ENCODE measurements at regions of chr15 and their contacts with region 1.

Region 1: DNA sequence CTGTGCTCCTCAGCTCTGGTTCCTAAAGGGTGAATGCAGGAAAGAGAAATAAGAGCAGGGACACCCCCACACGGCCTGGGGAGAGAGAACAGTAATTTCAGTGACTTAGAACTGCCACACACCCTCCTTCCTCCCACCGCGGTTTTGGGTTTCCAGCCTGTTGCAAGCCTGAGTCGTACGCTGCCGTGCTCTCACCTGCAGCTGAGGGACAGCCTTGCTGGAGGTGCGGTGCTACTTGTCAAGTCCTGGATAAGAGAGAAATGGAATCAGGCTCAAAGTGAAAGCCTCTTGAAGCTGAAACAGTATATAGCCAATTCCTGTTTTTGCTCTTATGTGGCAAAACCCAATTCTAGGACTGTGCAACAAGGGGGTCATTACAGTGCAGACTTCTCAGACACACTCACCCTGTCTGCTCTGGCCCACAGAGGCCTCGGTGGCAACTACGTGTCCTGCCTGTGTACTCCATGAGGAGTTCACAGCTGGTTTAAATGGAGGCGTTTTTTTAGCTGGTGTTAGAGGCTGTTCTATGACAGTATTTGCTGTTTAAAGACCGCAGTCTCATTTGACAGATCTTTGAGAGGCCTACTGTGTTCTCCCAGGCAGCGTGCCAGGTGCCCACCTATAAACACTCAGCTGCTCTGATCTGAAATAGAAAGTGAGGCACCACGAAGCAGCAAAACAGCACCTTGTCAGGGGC is 42.9 kb downstream of the TBC1D2B start:
- DNase-seq: peak; percentile 60 to 89 (median 76)
- ATAC-seq: peak; percentile 89
- H3K4me3 ChIP-seq: peak overlapping the region; percentile 9
- H3K4me3 Mint-ChIP-seq: peak overlapping the region; percentile 67
- H3K27ac ChIP-seq: peak overlapping the region; percentile 56 to 72
- H3K27ac Mint-ChIP-seq: peak overlapping the region; percentile 95
- H3K4me1 ChIP-seq: peaks cover 68% of the 10 kb centered on the region
- H3K4me1 Mint-ChIP-seq: peaks cover 90% of the 10 kb centered on the region
- H3K27me3 ChIP-seq: no peaks in the 10 kb centered on the region
- H3K27me3 Mint-ChIP-seq: no peaks in the 10 kb centered on the region
- CTCF ChIP-seq: no peak

Region 2: GRCh38 chr15:77921664-77922063 is 113.0 kb before region 1 on chr15:
- CTCF ChIA-PET with region 1: no interaction called
- POLR2A ChIA-PET with region 1: no interaction called
- intact Hi-C with region 1: no loop called
- DNase-seq: no peak
- ATAC-seq: no peak
- H3K4me3 ChIP-seq: no peak overlapping the region
- H3K4me3 Mint-ChIP-seq: no peak overlapping the region
- H3K27ac ChIP-seq: no peak overlapping the region
- H3K27ac Mint-ChIP-seq: no peak overlapping the region
- H3K4me1 ChIP-seq: no peaks in the 10 kb centered on the region
- H3K4me1 Mint-ChIP-seq: no peaks in the 10 kb centered on the region
- H3K27me3 ChIP-seq: no peaks in the 10 kb centered on the region
- H3K27me3 Mint-ChIP-seq: peaks cover 9% of the 10 kb centered on the region
- CTCF ChIP-seq: no peak

Region 3: GRCh38 chr15:78018946-78019644 is 15.5 kb before region 1 on chr15:
- CTCF ChIA-PET with region 1: interaction called, 3 read pairs
- POLR2A ChIA-PET with region 1: interaction called, 11 read pairs
- intact Hi-C with region 1: no loop called
- DNase-seq: peak in 3 of 14 experiments; percentile 36 to 62 (median 57)
- ATAC-seq: peak; percentile 73
- H3K4me3 ChIP-seq: no peak overlapping the region
- H3K4me3 Mint-ChIP-seq: no peak overlapping the region
- H3K27ac ChIP-seq: no peak overlapping the region
- H3K27ac Mint-ChIP-seq: peak overlapping the region; percentile 73
- H3K4me1 ChIP-seq: peaks cover 4% of the 10 kb centered on the region
- H3K4me1 Mint-ChIP-seq: peaks cover 33% of the 10 kb centered on the region
- H3K27me3 ChIP-seq: no peaks in the 10 kb centered on the region
- H3K27me3 Mint-ChIP-seq: no peaks in the 10 kb centered on the region
- CTCF ChIP-seq: no peak

Region 4: DNA sequence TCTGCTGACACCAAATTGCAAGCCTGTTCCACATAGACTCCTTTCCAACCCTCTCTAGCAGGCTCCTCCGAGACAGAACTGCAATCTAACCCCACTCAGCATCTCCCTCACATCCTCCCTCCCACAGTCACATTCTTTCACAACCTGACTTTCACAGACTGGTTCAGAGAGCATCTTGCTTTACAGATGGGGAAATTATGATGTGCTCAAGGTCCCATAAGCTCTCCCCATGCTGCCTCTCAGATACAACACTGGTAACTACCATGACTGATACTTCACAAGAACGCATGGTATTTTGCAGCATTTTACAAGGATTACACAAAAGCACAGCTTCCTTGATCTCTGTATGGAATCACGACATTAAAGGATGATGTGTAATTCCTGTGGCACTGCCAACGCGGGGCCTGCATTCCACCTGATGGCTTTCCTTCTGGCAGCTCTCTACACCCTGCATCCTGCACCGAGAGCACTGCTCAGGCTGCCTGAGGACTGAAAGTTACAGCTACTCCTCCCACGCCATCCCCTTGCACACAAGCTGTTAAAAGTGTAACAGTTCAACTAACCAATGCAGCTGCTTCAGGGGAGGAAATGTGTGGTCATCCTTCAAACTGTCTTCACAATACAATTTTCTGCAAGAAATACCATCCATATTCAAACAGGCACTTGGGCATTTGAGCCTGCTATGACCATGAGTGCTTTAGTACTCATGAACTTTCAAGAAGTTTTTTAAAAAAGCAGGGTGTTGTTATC is 15.2 kb after region 1 on chr15:
- CTCF ChIA-PET with region 1: interaction called, 37 read pairs
- POLR2A ChIA-PET with region 1: interaction called, 123 read pairs
- intact Hi-C with region 1: loop called (anchors 1 to 2 kb)
- DNase-seq: peak in 8 of 14 experiments; percentile 25 to 79 (median 45)
- ATAC-seq: peak; percentile 47
- H3K4me3 ChIP-seq: peak overlapping the region; percentile 16
- H3K4me3 Mint-ChIP-seq: peak overlapping the region; percentile 76
- H3K27ac ChIP-seq: peak overlapping the region; percentile 78 to 83
- H3K27ac Mint-ChIP-seq: peak overlapping the region; percentile 84
- H3K4me1 ChIP-seq: peaks cover 89% of the 10 kb centered on the region
- H3K4me1 Mint-ChIP-seq: peaks cover 98% of the 10 kb centered on the region
- H3K27me3 ChIP-seq: no peaks in the 10 kb centered on the region
- H3K27me3 Mint-ChIP-seq: no peaks in the 10 kb centered on the region
- CTCF ChIP-seq: no peak

Region 5: DNA sequence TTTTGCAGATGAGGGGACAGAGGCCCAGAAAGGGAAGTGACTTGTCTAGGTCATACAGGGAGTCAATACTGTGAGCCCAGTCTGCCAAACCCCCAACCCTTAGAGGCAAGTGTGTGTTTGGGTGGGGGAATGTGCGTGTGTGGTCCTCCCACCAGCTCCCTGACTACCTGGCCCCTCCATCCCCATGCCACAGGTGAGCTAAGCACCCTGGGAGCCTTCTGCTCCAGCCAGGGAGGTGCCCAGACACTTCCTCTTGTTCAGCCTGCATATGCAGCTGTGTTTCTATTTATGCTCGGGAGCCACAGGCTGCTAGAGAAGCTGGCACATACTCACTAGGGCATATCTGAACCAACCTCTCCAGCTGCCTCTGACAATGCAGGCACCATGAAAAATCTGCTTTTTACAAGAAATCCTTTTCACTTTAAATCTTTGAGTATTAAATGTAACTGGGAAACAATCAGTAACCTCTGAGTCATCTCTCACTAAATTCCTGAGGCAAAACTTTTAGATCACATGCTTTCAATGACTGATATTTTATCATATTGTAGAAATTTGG is 22.1 kb after region 1 on chr15:
- CTCF ChIA-PET with region 1: interaction called, 37 read pairs
- POLR2A ChIA-PET with region 1: interaction called, 123 read pairs
- intact Hi-C with region 1: loop called in 1 of 2 experiments (anchors 2 kb)
- DNase-seq: peak in 7 of 14 experiments; percentile 27 to 58 (median 42)
- ATAC-seq: peak; percentile 57
- H3K4me3 ChIP-seq: peak overlapping the region; percentile 16
- H3K4me3 Mint-ChIP-seq: peak overlapping the region; percentile 50
- H3K27ac ChIP-seq: peak overlapping the region; percentile 58 to 79
- H3K27ac Mint-ChIP-seq: peak overlapping the region; percentile 84
- H3K4me1 ChIP-seq: peaks cover 89% of the 10 kb centered on the region
- H3K4me1 Mint-ChIP-seq: peaks cover 87% of the 10 kb centered on the region
- H3K27me3 ChIP-seq: no peaks in the 10 kb centered on the region
- H3K27me3 Mint-ChIP-seq: no peaks in the 10 kb centered on the region
- CTCF ChIP-seq: no peak

Region 6: GRCh38 chr15:78065284-78065872 is 30.7 kb after region 1 on chr15:
- CTCF ChIA-PET with region 1: interaction called, 19 read pairs
- POLR2A ChIA-PET with region 1: interaction called, 47 read pairs
- intact Hi-C with region 1: loop called in 1 of 2 experiments (anchors 1 kb)
- DNase-seq: peak in 3 of 14 experiments; percentile 50 to 65 (median 50)
- ATAC-seq: peak; percentile 13
- H3K4me3 ChIP-seq: peak overlapping the region; percentile 9
- H3K4me3 Mint-ChIP-seq: no peak overlapping the region
- H3K27ac ChIP-seq: peak overlapping the region; percentile 39 to 79
- H3K27ac Mint-ChIP-seq: no peak overlapping the region
- H3K4me1 ChIP-seq: peaks cover 86% of the 10 kb centered on the region
- H3K4me1 Mint-ChIP-seq: peaks cover 2% of the 10 kb centered on the region
- H3K27me3 ChIP-seq: no peaks in the 10 kb centered on the region
- H3K27me3 Mint-ChIP-seq: no peaks in the 10 kb centered on the region
- CTCF ChIP-seq: no peak

Measured in CD4-positive, alpha-beta T cell (primary cell).